Heart right ventricle (tissue), 16 donors: ENCODE measurements at regions of chr9 and their contacts with region 1.

Region 1: GRCh38 chr9:98255578-98256296 is at the start of gene TBC1D2:
- DNase-seq: peak; percentile 96
- ATAC-seq: peak; percentile 97 to 99 (median 98)
- H3K4me3 ChIP-seq: peak within 1 kb of the TSS; percentile 51 to 96 (median 83)
- H3K27ac ChIP-seq: peak within 1 kb of the TSS; percentile 80 to 99 (median 94)
- H3K4me1 ChIP-seq: peaks cover 3 to 53% (median 15%) of the 10 kb centered on the region in 9 donors
- H3K27me3 ChIP-seq: no peaks in the 10 kb centered on the region
- CTCF ChIP-seq: peak in 4 of 9 donors; percentile 24 to 40 (median 31)
- total RNA-seq, gene TBC1D2: 0.49 to 4.3 (median 1.7) TPM

Region 2: GRCh38 chr9:97921959-97922724 is 333.6 kb before region 1 on chr9 and contains the start of gene TRMO:
- intact Hi-C with region 1: loop called in 7 of 10 experiments (anchors 1 to 5 kb)
- DNase-seq: peak; percentile 97 to 99
- ATAC-seq: peak; percentile 95 to 98 (median 97)
- H3K4me3 ChIP-seq: peak within 1 kb of the TSS; percentile 44 to 79 (median 64)
- H3K27ac ChIP-seq: peak within 1 kb of the TSS; percentile 90 to 100 (median 96)
- H3K4me1 ChIP-seq: peaks cover 6 to 43% (median 17%) of the 10 kb centered on the region in 9 donors
- H3K27me3 ChIP-seq: peaks cover 0 to 14% (median 0%) of the 10 kb centered on the region in 7 donors
- CTCF ChIP-seq: peak; percentile 38 to 94 (median 75)
- total RNA-seq, gene TRMO: 7.4 to 12.8 (median 8.2) TPM

Region 3: DNA sequence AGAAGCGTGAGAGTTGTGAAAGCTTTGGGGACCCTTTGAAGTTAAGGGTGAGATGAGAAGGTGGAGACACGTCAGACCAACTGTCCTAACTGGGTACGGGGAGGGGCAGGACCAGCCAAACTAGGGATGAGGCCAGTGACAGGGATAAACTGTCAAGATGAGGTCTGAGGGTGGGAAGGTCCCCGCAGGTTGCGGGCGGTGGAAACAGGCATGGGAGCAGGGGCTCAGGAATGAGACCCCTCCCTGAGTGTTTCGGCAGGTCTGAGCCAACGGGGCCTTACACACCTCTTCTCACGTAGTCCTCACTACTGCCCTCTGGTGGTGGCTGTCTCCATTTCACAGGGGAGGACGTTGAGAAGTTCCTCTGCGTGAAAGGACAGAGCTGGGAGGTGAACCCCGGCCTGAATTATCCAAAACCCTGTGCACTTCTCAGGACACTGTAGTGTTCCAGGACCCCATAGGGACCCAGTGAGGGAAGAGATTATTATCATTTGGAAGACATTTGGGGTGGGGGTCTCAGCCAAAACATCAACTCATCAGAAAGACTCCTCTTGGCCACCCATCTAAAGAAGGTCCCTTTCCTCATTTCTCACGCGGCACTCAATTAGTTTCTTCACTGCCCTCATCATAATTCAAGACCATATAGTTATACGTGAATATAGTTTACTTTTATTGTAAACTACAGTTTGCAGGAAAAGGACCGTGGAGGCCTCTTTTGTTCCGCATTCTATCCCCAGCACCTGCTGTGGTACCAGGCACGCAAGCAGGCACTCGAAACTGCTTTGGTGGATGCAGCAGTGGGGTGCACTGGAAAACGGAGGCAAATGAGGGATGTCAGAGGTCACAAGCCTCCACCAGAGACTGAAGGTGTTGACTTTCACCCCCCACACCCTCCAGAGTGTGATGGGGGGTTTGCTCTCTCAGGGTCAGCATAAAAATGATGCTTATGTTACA is 220.9 kb before region 1 on chr9:
- intact Hi-C with region 1: loop called in 1 of 10 experiments (anchors 10 kb)
- DNase-seq: peak; percentile 75 to 88
- ATAC-seq: peak; percentile 80 to 92 (median 86)
- H3K4me3 ChIP-seq: peak overlapping the region in 3 of 10 donors; percentile 7 to 22 (median 22)
- H3K27ac ChIP-seq: no peak overlapping the region
- H3K4me1 ChIP-seq: peaks cover 0 to 22% (median 15%) of the 10 kb centered on the region in 9 donors
- H3K27me3 ChIP-seq: no peaks in the 10 kb centered on the region
- CTCF ChIP-seq: peak; percentile 69 to 92 (median 89)

Region 4: GRCh38 chr9:98074115-98074990 is 181.4 kb before region 1 on chr9:
- intact Hi-C with region 1: loop called in 7 of 10 experiments (anchors 5 to 10 kb)
- DNase-seq: peak; percentile 38 to 59
- ATAC-seq: peak in 6 of 8 donors; percentile 24 to 71 (median 62)
- H3K4me3 ChIP-seq: no peak overlapping the region
- H3K27ac ChIP-seq: peak overlapping the region in 1 of 10 donors; percentile 76
- H3K4me1 ChIP-seq: peaks cover 0 to 24% (median 9%) of the 10 kb centered on the region in 9 donors
- H3K27me3 ChIP-seq: no peaks in the 10 kb centered on the region
- CTCF ChIP-seq: peak; percentile 79 to 97 (median 94)

Region 5: GRCh38 chr9:99118782-99119466 is 863.2 kb after region 1 on chr9:
- intact Hi-C with region 1: no loop called
- DNase-seq: no peak
- ATAC-seq: peak in 6 of 8 donors; percentile 34 to 47 (median 40)
- H3K4me3 ChIP-seq: peak overlapping the region in 1 of 10 donors; percentile 23
- H3K27ac ChIP-seq: peak overlapping the region in 1 of 10 donors; percentile 77
- H3K4me1 ChIP-seq: peaks cover 4 to 76% (median 56%) of the 10 kb centered on the region in 9 donors
- H3K27me3 ChIP-seq: no peaks in the 10 kb centered on the region
- CTCF ChIP-seq: no peak